CD4-positive, alpha-beta T cell (primary cell): ENCODE measurements at regions of chr5 and their contacts with region 1.

Region 1: DNA sequence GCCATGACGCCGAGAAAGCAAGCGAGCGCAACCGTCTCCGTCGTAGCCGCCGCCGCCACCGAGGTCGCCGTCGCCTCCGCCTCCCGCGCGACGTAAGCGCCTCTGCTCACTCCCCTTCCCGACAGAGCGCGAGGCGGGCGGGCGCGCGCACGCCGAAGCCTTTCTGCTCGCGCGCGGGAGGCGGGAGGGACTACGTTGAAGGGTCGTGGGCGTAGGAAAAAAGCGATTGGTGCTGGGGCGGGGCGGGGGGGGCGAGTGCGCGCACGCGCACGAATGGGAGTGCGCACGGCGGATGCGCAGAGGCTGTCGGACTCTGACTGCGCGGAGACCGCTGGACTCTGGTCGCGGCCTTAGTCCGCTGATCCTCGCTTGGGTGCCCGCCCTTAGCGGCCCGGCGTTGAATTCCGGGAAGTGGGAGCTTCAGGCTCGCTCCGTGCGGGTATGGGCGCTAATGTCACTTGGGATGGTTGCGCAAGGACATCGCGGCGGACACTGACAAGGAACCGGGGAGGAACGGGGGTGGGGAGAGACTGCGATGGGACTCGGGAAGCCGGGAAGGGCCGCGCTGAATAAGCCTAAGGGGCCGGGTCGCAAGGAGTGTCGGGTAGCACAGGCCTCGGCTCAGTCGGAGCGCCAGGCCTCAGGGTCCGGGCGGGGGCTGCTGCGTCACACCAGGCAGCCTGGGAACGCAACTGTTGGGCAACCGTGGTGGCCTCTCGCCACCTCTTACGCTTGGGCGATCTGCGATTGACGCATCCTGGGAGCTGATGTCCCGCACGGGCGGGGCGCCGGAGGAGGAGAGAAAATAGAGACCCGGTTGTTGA is at the start of gene CHD1:
- DNase-seq: peak; percentile 89 to 99 (median 94)
- ATAC-seq: peak; percentile 50
- H3K4me3 ChIP-seq: peak within 1 kb of the TSS; percentile 97
- H3K4me3 Mint-ChIP-seq: peak within 1 kb of the TSS; percentile 99
- H3K27ac ChIP-seq: peak within 1 kb of the TSS; percentile 100
- H3K27ac Mint-ChIP-seq: peak within 1 kb of the TSS; percentile 97
- H3K4me1 ChIP-seq: peaks cover 23% of the 10 kb centered on the region
- H3K4me1 Mint-ChIP-seq: peaks cover 68% of the 10 kb centered on the region
- H3K27me3 ChIP-seq: no peaks in the 10 kb centered on the region
- H3K27me3 Mint-ChIP-seq: no peaks in the 10 kb centered on the region
- CTCF ChIP-seq: no peak
- total RNA-seq, gene CHD1: 217 to 228 TPM

Region 2: GRCh38 chr5:97183100-97183929 is 1745.8 kb before region 1 on chr5 and contains the start of gene RIOK2:
- CTCF ChIA-PET with region 1: no interaction called
- POLR2A ChIA-PET with region 1: interaction called, 11 read pairs
- intact Hi-C with region 1: loop called (anchors 5 kb)
- DNase-seq: peak; percentile 81 to 96 (median 90)
- ATAC-seq: peak; percentile 91
- H3K4me3 ChIP-seq: peak within 1 kb of the TSS; percentile 73
- H3K4me3 Mint-ChIP-seq: peak within 1 kb of the TSS; percentile 97
- H3K27ac ChIP-seq: peak within 1 kb of the TSS; percentile 90 to 96
- H3K27ac Mint-ChIP-seq: peak within 1 kb of the TSS; percentile 98
- H3K4me1 ChIP-seq: peaks cover 11% of the 10 kb centered on the region
- H3K4me1 Mint-ChIP-seq: peaks cover 44% of the 10 kb centered on the region
- H3K27me3 ChIP-seq: no peaks in the 10 kb centered on the region
- H3K27me3 Mint-ChIP-seq: no peaks in the 10 kb centered on the region
- CTCF ChIP-seq: no peak
- total RNA-seq, gene RIOK2: 25.1 to 26.0 TPM

Region 3: DNA sequence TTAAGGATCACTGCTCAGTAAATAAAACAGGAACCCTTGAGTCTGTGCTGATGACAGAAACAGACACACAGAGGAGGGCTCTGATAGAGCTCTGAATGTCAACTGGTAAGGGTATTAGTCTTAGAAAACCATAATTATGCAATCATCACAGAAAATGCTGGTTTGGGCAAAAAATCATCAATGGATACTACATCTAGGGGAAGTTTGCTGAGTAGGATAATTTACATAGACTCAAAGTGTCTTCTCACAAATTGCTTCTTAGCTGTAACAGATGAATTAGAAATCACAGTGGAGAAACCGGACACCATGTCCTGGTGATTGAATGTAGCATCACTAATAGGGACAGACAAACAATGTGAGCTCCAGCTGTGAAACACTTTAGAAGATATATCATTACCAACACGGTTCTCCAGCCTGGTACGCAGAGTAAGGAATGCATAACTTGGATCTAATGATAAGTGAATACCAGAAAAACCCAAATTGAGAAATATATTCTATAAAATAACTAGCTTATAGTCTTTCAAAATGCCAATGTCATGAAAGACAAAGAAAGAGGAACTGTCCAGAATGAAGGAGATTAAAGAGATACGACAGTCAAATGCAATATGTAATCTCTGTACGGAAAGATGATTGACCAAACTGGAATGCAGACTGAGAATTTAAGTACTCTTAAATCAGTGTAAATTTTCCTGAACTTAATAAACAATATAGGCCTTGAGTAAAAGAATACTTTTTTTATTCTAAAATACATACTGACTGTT is 17.6 kb before region 1 on chr5:
- CTCF ChIA-PET with region 1: no interaction called
- POLR2A ChIA-PET with region 1: interaction called, 41 read pairs
- intact Hi-C with region 1: loop called (anchors 2 kb)
- DNase-seq: peak in 1 of 14 experiments; percentile 17
- ATAC-seq: no peak
- H3K4me3 ChIP-seq: no peak overlapping the region
- H3K4me3 Mint-ChIP-seq: peak overlapping the region; percentile 11
- H3K27ac ChIP-seq: no peak overlapping the region
- H3K27ac Mint-ChIP-seq: peak overlapping the region; percentile 5
- H3K4me1 ChIP-seq: peaks cover 11% of the 10 kb centered on the region
- H3K4me1 Mint-ChIP-seq: peaks cover 76% of the 10 kb centered on the region
- H3K27me3 ChIP-seq: no peaks in the 10 kb centered on the region
- H3K27me3 Mint-ChIP-seq: no peaks in the 10 kb centered on the region
- CTCF ChIP-seq: no peak

Region 4: GRCh38 chr5:99004960-99005359 is 75.9 kb after region 1 on chr5:
- CTCF ChIA-PET with region 1: no interaction called
- POLR2A ChIA-PET with region 1: interaction called, 10 read pairs
- intact Hi-C with region 1: no loop called
- DNase-seq: peak in 4 of 14 experiments; percentile 8 to 74 (median 52)
- ATAC-seq: peak; percentile 97
- H3K4me3 ChIP-seq: no peak overlapping the region
- H3K4me3 Mint-ChIP-seq: no peak overlapping the region
- H3K27ac ChIP-seq: no peak overlapping the region
- H3K27ac Mint-ChIP-seq: no peak overlapping the region
- H3K4me1 ChIP-seq: no peaks in the 10 kb centered on the region
- H3K4me1 Mint-ChIP-seq: peaks cover 14% of the 10 kb centered on the region
- H3K27me3 ChIP-seq: no peaks in the 10 kb centered on the region
- H3K27me3 Mint-ChIP-seq: no peaks in the 10 kb centered on the region
- CTCF ChIP-seq: no peak

Region 5: DNA sequence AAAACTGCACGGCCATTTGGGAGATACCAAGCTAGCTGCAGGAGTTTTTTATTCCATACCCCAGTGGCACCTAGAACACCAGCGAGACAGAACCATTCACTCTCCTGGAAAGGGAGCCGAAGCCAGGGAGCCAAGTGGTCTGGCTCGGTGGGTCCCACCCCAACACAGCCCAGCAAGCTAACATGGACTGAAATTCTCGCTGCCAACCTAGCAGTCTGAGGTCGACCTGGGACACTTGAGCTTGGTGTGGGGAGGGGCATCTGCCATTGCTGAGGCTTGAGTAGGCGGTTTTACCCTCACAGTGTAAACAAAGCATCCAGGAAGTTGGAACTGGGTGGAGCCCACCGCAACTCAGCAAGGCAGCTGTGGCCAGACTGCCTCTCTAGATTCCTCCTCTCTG is 108.6 kb after region 1 on chr5:
- CTCF ChIA-PET with region 1: no interaction called
- POLR2A ChIA-PET with region 1: interaction called, 109 read pairs
- intact Hi-C with region 1: loop called (anchors 2 to 5 kb)
- DNase-seq: peak; percentile 48 to 89 (median 67)
- ATAC-seq: peak; percentile 77
- H3K4me3 ChIP-seq: no peak overlapping the region
- H3K4me3 Mint-ChIP-seq: peak overlapping the region; percentile 79
- H3K27ac ChIP-seq: peak overlapping the region; percentile 35 to 45
- H3K27ac Mint-ChIP-seq: peak overlapping the region; percentile 93
- H3K4me1 ChIP-seq: peaks cover 26% of the 10 kb centered on the region
- H3K4me1 Mint-ChIP-seq: peaks cover 71% of the 10 kb centered on the region
- H3K27me3 ChIP-seq: no peaks in the 10 kb centered on the region
- H3K27me3 Mint-ChIP-seq: no peaks in the 10 kb centered on the region
- CTCF ChIP-seq: no peak

Region 6: GRCh38 chr5:99088309-99088708 is 159.2 kb after region 1 on chr5:
- CTCF ChIA-PET with region 1: no interaction called
- POLR2A ChIA-PET with region 1: interaction called, 13 read pairs
- intact Hi-C with region 1: no loop called
- DNase-seq: no peak
- ATAC-seq: no peak
- H3K4me3 ChIP-seq: no peak overlapping the region
- H3K4me3 Mint-ChIP-seq: no peak overlapping the region
- H3K27ac ChIP-seq: no peak overlapping the region
- H3K27ac Mint-ChIP-seq: no peak overlapping the region
- H3K4me1 ChIP-seq: no peaks in the 10 kb centered on the region
- H3K4me1 Mint-ChIP-seq: peaks cover 11% of the 10 kb centered on the region
- H3K27me3 ChIP-seq: no peaks in the 10 kb centered on the region
- H3K27me3 Mint-ChIP-seq: no peaks in the 10 kb centered on the region
- CTCF ChIP-seq: no peak

Region 7: DNA sequence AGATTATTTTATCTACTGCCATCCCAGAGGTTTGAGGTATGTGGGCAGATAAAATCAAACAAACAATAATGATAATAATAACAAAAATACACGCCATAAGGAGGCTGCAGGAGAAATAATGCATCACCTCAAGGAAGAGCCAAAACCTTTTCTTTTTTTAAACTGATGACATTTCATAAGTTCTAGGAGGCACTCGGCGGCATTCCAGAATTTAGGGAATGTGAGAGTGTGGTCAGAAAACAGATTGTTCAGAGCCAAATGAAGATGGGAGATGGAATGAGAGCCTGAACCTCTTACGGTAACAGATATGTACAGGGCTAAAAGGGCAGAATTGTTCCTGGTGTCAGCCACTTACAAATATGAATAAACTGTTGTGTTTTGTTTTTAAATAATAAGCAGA is 614.8 kb after region 1 on chr5:
- CTCF ChIA-PET with region 1: no interaction called
- POLR2A ChIA-PET with region 1: no interaction called
- intact Hi-C with region 1: no loop called
- DNase-seq: no peak
- ATAC-seq: no peak
- H3K4me3 ChIP-seq: no peak overlapping the region
- H3K4me3 Mint-ChIP-seq: no peak overlapping the region
- H3K27ac ChIP-seq: no peak overlapping the region
- H3K27ac Mint-ChIP-seq: no peak overlapping the region
- H3K4me1 ChIP-seq: no peaks in the 10 kb centered on the region
- H3K4me1 Mint-ChIP-seq: no peaks in the 10 kb centered on the region
- H3K27me3 ChIP-seq: no peaks in the 10 kb centered on the region
- H3K27me3 Mint-ChIP-seq: no peaks in the 10 kb centered on the region
- CTCF ChIP-seq: no peak